ENCODE measurements at regions of chr1 and their contacts with region 1.

Region 1: DNA sequence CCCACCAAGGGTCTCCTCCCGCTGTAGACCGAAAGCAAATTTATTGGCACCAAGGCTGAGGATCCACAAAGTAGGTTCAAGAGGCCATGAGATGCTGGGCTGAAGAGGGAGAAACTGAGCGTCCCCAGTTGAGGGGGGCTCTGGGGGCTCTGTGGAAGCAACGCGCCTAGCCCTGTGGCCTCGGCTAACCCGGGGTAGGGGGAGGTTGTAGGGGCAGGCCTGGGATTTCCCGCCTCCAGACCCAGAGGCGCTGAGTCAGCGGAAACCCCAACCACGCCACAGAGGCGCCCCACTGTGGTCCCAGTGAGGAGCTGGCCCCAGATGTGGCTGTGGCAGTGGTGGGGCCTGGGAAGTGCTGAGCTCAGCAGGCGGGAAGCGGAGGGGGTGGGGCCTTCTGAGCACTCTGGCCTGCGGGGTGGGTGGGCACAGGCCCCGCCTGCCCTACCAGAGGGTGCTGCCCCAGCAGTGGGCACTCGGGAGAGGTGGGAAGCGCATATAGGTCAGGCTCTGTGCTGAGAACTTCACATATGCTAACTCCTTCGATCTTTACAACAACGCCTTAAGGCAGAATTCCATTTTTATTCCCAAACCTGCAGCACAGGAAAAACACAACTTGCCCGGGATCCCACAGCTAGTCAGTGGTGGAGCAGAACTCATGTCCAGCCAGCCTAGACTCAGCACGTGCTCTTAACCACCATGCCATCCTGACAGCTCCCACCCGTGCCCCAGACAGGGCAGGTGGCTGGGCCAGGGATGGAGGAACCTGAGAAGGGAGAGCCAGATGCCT is 1.5 kb upstream of the COL16A1 start:
- DNase-seq: peak; percentile 63
- H3K4me3 ChIP-seq: peak overlapping the region; percentile 8 to 35 (median 10)
- H3K27ac ChIP-seq: peak overlapping the region; percentile 53
- H3K4me1 ChIP-seq: peaks cover 55% of the 10 kb centered on the region
- H3K27me3 ChIP-seq: no peaks in the 10 kb centered on the region
- CTCF ChIP-seq: peak; percentile 29 to 60

Region 2: DNA sequence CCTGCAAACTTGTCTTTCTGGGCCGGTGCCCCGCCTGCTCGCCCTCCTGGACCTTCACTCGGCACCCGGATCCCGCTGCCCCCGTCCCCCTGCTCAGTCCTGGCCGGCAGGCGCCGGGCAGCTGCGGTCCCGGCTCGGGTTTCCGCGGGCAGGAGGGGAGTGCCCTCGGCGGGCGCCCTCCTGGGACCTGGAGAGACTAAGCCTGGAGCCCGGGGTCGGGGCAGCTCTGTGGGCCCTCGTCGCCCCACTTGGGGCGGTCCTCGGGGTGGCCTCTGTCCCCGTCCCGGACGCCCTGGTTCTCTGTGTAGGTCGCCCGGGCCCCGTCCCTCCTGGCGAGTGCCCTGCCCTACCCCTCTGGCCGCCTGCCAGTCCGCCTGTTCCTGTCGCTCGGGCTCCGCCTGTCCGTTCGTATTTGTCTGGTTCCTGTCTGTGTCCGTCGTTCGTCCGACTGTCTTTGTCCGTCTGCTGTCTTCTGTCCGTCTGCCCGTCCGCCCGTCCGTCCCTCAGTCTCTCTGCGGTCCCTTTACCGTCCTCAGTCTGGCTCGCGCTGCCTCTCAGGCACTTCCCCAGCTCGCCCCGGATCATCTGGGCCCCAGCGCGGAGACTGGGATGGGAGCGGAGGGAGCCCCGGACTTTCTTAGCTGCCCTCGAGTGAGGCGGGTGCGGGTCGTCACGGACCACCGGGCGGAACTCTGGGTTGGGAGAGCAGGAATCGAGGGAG is 291.7 kb before region 1 on chr1:
- CTCF ChIA-PET with region 1: no interaction called
- dilution Hi-C with region 1: no loop called
- in situ Hi-C with region 1: no loop called
- intact Hi-C with region 1: loop called (anchors 10 kb)
- DNase-seq: peak; percentile 53
- H3K4me3 ChIP-seq: peak overlapping the region; percentile 73 to 97 (median 92)
- H3K27ac ChIP-seq: peak overlapping the region; percentile 67
- H3K4me1 ChIP-seq: peaks cover 63% of the 10 kb centered on the region
- H3K27me3 ChIP-seq: no peaks in the 10 kb centered on the region
- CTCF ChIP-seq: no peak

Region 3: DNA sequence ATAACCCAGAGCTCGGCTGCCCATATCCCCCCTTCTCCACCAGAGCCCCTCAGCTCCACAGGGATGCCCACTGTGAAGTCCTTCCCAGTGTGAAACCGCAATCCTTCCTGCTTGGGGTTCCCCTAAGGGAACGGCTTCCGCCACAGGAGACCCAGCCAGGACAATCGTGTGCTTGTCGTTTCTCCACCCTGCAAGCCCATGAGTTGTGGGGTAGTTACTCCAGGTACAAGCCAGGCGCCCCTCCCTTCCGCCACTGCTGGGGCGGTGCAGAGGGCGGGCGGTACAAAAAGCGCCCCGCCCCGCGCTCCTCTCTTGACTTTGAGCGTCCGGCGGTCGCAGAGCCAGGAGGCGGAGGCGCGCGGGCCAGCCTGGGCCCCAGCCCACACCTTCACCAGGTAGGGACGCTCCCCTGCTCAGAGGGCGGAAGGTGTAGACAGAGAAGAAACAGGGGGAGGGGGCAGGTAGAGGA is 129.0 kb before region 1 on chr1 and contains the start of gene TINAGL1:
- CTCF ChIA-PET with region 1: no interaction called
- dilution Hi-C with region 1: no loop called
- in situ Hi-C with region 1: no loop called
- intact Hi-C with region 1: loop called (anchors 5 kb)
- DNase-seq: peak; percentile 96
- H3K4me3 ChIP-seq: peak within 1 kb of the TSS; percentile 71 to 90 (median 83)
- H3K27ac ChIP-seq: peak within 1 kb of the TSS; percentile 68
- H3K4me1 ChIP-seq: peaks cover 64% of the 10 kb centered on the region
- H3K27me3 ChIP-seq: no peaks in the 10 kb centered on the region
- CTCF ChIP-seq: no peak
- total RNA-seq, gene TINAGL1: 433 to 840 TPM

Region 4: DNA sequence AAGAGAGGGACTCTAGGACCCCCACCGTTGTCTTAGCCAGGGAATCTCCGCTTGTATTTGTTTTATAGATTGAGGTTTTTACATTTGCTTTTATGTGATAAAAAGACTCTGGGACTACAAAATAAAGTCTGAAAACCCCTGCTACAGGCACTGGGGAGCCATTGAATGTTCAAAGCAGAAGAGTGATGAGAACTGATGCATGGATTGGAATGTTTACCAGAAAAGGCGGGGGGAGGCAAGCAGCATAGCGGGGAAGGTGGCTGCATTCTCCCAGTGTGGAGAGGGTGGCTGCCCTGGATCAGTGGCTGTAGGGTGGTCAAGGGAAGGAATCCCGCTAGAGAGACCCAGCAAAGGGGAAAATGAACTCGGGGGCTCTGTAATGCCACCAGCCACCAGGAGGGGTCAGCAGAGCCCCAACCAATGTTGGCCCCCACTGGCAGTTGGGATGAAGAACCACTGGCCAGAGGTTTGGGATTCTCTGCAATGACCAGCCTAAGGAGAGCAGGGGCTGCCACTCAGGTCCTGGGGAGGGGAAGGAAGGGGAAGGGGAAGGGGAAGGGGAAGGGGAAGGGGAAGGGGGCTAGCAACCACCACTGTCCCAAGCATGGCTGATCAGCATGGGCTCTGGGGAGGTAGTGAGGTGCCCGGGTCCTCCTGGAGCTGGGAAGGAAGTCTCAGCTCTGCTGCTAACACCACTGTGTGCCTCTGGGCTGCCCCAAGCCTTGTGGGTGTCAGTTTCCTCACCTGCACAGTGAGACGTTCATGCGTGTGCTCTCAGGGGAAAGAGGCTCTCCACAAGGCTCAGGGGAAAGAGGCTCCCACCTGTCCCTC is 41.4 kb before region 1 on chr1:
- CTCF ChIA-PET with region 1: no interaction called
- dilution Hi-C with region 1: no loop called
- in situ Hi-C with region 1: no loop called
- intact Hi-C with region 1: loop called (anchors 1 kb)
- DNase-seq: no peak
- H3K4me3 ChIP-seq: no peak overlapping the region
- H3K27ac ChIP-seq: no peak overlapping the region
- H3K4me1 ChIP-seq: peaks cover 23% of the 10 kb centered on the region
- H3K27me3 ChIP-seq: no peaks in the 10 kb centered on the region
- CTCF ChIP-seq: peak; percentile 75 to 77

Region 5: GRCh38 chr1:31689821-31690220 is 15.5 kb before region 1 on chr1:
- CTCF ChIA-PET with region 1: no interaction called
- dilution Hi-C with region 1: no loop called
- in situ Hi-C with region 1: no loop called
- intact Hi-C with region 1: loop called (anchors 1 kb)
- DNase-seq: peak; percentile 95
- H3K4me3 ChIP-seq: no peak overlapping the region
- H3K27ac ChIP-seq: peak overlapping the region; percentile 2
- H3K4me1 ChIP-seq: peaks cover 20% of the 10 kb centered on the region
- H3K27me3 ChIP-seq: no peaks in the 10 kb centered on the region
- CTCF ChIP-seq: no peak

Region 6: DNA sequence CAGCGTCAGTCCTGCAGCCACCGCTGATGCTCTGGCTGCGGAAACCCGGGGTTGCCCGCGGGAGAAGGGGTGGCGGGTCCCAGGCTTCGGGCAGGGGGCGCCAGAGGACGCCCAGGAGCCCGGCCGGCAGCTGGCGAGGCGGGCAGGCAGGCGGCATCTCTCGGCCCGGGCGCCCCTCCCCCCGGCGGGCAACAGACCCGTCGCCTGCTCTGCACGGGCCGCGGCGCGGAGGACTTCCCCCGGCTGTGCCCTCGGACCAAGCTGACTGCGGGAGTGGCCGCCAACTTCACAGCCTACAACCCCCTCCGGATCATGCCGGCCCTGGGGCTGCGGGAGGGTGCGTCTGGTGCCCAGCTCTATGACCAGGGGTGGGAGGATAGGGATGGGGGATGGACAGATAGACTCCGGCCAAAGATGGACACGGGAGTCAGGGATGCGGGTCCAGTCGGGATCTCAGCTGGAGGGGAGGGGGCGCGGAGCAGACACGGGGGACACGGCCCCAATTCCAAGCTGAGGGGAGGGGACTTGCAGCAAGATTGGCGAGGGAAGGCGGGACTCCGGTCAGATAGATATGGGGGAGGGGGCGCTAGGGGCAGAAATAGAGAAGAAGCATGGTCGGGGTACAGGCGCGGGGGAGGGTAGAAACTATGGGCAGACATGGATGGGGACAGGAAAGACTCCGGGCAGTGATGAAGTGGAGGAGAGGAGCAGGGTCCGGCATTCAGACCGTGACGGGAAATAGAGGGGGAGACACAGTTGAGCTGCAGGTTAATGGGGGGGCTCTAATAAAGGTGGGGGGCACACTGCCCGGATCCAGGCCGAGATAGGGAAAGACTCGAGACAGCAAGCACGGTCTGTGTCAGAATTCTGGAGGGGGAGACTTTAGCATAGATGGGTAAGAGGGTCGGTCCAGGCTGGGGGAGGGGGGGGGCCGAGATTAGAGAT is 57.7 kb after region 1 on chr1:
- CTCF ChIA-PET with region 1: no interaction called
- dilution Hi-C with region 1: no loop called
- in situ Hi-C with region 1: no loop called
- intact Hi-C with region 1: no loop called
- DNase-seq: peak; percentile 43
- H3K4me3 ChIP-seq: peak overlapping the region; percentile 29 to 48 (median 32)
- H3K27ac ChIP-seq: no peak overlapping the region
- H3K4me1 ChIP-seq: peaks cover 38% of the 10 kb centered on the region
- H3K27me3 ChIP-seq: no peaks in the 10 kb centered on the region
- CTCF ChIP-seq: peak; percentile 25 to 62

Region 7: DNA sequence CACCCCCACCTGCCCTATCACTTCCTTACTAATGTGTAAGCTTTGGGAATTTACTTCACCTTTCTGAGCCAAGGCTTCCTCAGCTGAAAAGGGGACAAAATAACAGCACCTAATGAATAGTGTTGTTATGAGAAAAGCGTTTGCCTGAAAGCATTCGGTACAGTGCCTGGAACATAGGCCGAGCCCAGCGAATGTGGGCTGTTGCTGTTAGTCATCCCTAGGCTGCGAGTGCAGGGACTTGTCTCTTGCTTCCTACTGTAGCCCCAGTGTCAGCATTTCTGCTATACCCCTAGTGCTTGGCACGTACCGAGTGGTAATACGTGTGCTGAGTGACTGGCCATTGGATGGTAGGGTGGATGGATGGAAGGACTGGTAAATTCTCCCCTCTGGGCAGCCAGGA is 385.9 kb after region 1 on chr1:
- CTCF ChIA-PET with region 1: no interaction called
- dilution Hi-C with region 1: no loop called
- in situ Hi-C with region 1: no loop called
- intact Hi-C with region 1: no loop called
- DNase-seq: no peak
- H3K4me3 ChIP-seq: no peak overlapping the region
- H3K27ac ChIP-seq: no peak overlapping the region
- H3K4me1 ChIP-seq: no peaks in the 10 kb centered on the region
- H3K27me3 ChIP-seq: no peaks in the 10 kb centered on the region
- CTCF ChIP-seq: no peak

Measured in mammary epithelial cell (primary cell).